SK-N-SH (cell line): ENCODE measurements at regions of chr11 and their contacts with region 1.

Region 1: DNA sequence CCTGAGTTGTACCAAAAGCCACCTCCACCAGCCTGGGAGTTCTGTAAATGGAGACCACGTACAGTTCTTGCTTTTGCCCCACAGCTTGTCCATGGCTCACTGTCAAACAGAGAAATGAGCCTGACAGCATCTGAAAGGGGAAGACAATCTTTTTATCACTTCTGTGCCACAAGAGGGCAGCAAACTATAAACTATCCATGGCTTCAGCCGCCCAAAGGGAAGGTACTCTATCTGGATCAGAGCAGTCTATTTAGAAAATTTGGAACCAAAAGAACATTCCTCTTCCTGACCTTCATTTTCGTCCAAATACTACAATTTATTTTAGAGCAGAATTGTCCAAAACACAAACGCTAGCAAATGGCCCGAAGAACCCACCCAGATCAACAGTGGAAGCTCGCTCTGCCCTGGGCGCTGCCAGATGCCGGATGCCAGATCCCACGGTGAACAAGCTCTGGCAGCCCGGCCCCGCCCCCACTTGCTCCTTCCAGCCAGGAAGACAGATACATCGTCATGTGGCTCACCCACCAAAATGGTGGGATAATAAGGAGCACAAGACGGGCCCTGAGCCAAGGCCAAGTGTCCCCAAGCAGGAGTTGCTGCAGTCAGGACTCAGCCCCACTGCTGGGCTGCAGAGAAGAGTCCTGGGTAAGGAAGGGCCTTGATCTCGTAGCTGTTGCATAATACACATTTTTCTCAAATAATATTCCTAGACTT is 23.9 kb upstream of the SCGB1A1 start:
- DNase-seq: peak; percentile 89
- H3K4me3 ChIP-seq: peak overlapping the region; percentile 28 to 35
- H3K27ac ChIP-seq: peak overlapping the region; percentile 6 to 93; a peak in 3 of 4 replicates
- H3K4me1 ChIP-seq: peaks cover 18 to 39% of the 10 kb centered on the region in 2 experiments; a peak in 3 of 4 replicates
- H3K27me3 ChIP-seq: no peaks in the 10 kb centered on the region
- CTCF ChIP-seq: peak; percentile 78
- EP300 ChIP-seq: peak in 1 of 2 experiments; percentile 56; a peak in 2 of 4 replicates
- RAD21 ChIP-seq: peak; percentile 93

Region 2: DNA sequence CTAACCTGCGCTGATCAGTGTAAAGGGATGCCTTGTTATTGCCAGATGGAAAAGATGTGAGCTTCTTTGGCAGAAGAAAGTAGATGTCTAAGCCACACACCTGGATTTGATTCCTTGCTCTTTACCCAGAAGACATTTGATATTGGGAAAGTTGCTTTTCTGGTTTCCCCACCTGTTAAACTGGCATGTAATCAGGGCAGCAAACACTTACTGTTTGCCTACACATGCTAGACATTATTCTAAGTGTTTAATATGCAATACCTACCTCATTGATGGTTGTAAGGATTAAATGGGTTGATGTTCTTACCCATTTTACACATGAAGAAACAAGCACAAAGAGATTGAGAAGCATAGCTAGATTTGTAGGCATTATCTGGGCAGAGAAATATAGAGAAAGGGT is 41.1 kb before region 1 on chr11:
- CTCF ChIA-PET with region 1: no interaction called
- POLR2A ChIA-PET with region 1: no interaction called
- DNase-seq: no peak
- H3K4me3 ChIP-seq: no peak overlapping the region
- H3K27ac ChIP-seq: no peak overlapping the region
- H3K4me1 ChIP-seq: no peaks in the 10 kb centered on the region
- H3K27me3 ChIP-seq: no peaks in the 10 kb centered on the region
- CTCF ChIP-seq: no peak
- EP300 ChIP-seq: no peak
- RAD21 ChIP-seq: no peak

Region 3: GRCh38 chr11:62383822-62384221 is 11.2 kb before region 1 on chr11:
- CTCF ChIA-PET with region 1: interaction called, 12 read pairs
- POLR2A ChIA-PET with region 1: no interaction called
- DNase-seq: no peak
- H3K4me3 ChIP-seq: no peak overlapping the region
- H3K27ac ChIP-seq: no peak overlapping the region
- H3K4me1 ChIP-seq: peaks cover 0 to 11% of the 10 kb centered on the region in 2 experiments; a peak in 2 of 4 replicates
- H3K27me3 ChIP-seq: no peaks in the 10 kb centered on the region; the same call in 1 of the 2 replicates
- CTCF ChIP-seq: no peak
- EP300 ChIP-seq: no peak
- RAD21 ChIP-seq: no peak

Region 4: GRCh38 chr11:62427630-62428233 is 32.8 kb after region 1 on chr11:
- CTCF ChIA-PET with region 1: interaction called, 39 read pairs
- POLR2A ChIA-PET with region 1: no interaction called
- DNase-seq: peak; percentile 47
- H3K4me3 ChIP-seq: no peak overlapping the region
- H3K27ac ChIP-seq: peak overlapping the region; percentile 76 to 77
- H3K4me1 ChIP-seq: peaks cover 18 to 39% of the 10 kb centered on the region in 2 experiments
- H3K27me3 ChIP-seq: no peaks in the 10 kb centered on the region
- CTCF ChIP-seq: no peak
- EP300 ChIP-seq: peak in 1 of 2 experiments; percentile 79; a peak in 2 of 4 replicates
- RAD21 ChIP-seq: peak; percentile 18; the same call in 1 of the 2 replicates

Region 5: GRCh38 chr11:62542750-62543567 is 148.0 kb after region 1 on chr11:
- CTCF ChIA-PET with region 1: interaction called, 195 read pairs
- POLR2A ChIA-PET with region 1: interaction called, 11 read pairs
- DNase-seq: peak; percentile 90
- H3K4me3 ChIP-seq: peak overlapping the region; percentile 75 to 98
- H3K27ac ChIP-seq: peak overlapping the region in 1 of 2 experiments; percentile 82; a peak in 2 of 4 replicates
- H3K4me1 ChIP-seq: peaks cover 50 to 72% of the 10 kb centered on the region in 2 experiments
- H3K27me3 ChIP-seq: no peaks in the 10 kb centered on the region
- CTCF ChIP-seq: peak; percentile 92
- EP300 ChIP-seq: no peak
- RAD21 ChIP-seq: peak; percentile 87

Region 6: GRCh38 chr11:62580959-62581715 is 186.2 kb after region 1 on chr11:
- CTCF ChIA-PET with region 1: no interaction called
- POLR2A ChIA-PET with region 1: no interaction called
- DNase-seq: no peak
- H3K4me3 ChIP-seq: no peak overlapping the region
- H3K27ac ChIP-seq: no peak overlapping the region
- H3K4me1 ChIP-seq: no peaks in the 10 kb centered on the region
- H3K27me3 ChIP-seq: no peaks in the 10 kb centered on the region
- CTCF ChIP-seq: no peak
- EP300 ChIP-seq: no peak
- RAD21 ChIP-seq: no peak

Region 7: GRCh38 chr11:62591448-62592145 is 196.6 kb after region 1 on chr11 and contains the start of gene TUT1:
- CTCF ChIA-PET with region 1: interaction called, 25 read pairs
- POLR2A ChIA-PET with region 1: interaction called, 30 read pairs
- DNase-seq: peak; percentile 83
- H3K4me3 ChIP-seq: peak within 1 kb of the TSS; percentile 77 to 78
- H3K27ac ChIP-seq: peak within 1 kb of the TSS; percentile 86 to 94
- H3K4me1 ChIP-seq: peaks cover 13 to 17% of the 10 kb centered on the region in 2 experiments; a peak in 3 of 4 replicates
- H3K27me3 ChIP-seq: no peaks in the 10 kb centered on the region
- CTCF ChIP-seq: no peak; the same call in 1 of the 2 replicates
- EP300 ChIP-seq: 0 out of 4 replicates have a peak, but pooled peaks of 1 of the 2 experiments have one; percentile 22
- RAD21 ChIP-seq: no peak
- polyA plus RNA-seq, gene TUT1: 27.3 and 30.0 TPM in 2 replicates

Region 8: GRCh38 chr11:62665075-62665598 is 270.2 kb after region 1 on chr11 and contains the starts of genes C11orf98 and CSKMT:
- CTCF ChIA-PET with region 1: interaction called, 5 read pairs
- POLR2A ChIA-PET with region 1: interaction called, 15 read pairs
- DNase-seq: peak; percentile 97
- H3K4me3 ChIP-seq: peak within 1 kb of the TSS; percentile 78 to 95
- H3K27ac ChIP-seq: peak within 1 kb of the TSS; percentile 91 to 92
- H3K4me1 ChIP-seq: peaks cover 16 to 21% of the 10 kb centered on the region in 2 experiments; a peak in 3 of 4 replicates
- H3K27me3 ChIP-seq: no peaks in the 10 kb centered on the region
- CTCF ChIP-seq: no peak
- EP300 ChIP-seq: 0 out of 4 replicates have a peak, but pooled peaks of 1 of the 2 experiments have one; percentile 31
- RAD21 ChIP-seq: no peak
- polyA plus RNA-seq, gene C11orf98: 90.1 and 126 TPM in 2 replicates
- polyA plus RNA-seq, gene CSKMT: 9.5 and 11.1 TPM in 2 replicates